ENCODE measurements at regions of chr12 and their contacts with region 1.

Region 1: GRCh38 chr12:31659087-31659933 is at the start of gene ETFBKMT:
- DNase-seq: peak; percentile 99
- H3K4me3 ChIP-seq: peak within 1 kb of the TSS; percentile 86
- H3K27ac ChIP-seq: peak within 1 kb of the TSS; percentile 86
- H3K4me1 ChIP-seq: peaks cover 20% of the 10 kb centered on the region
- CTCF ChIP-seq: peak; percentile 65
- total RNA-seq, gene ETFBKMT: 0.54 and 0.92 TPM in 2 replicates

Region 2: GRCh38 chr12:31205054-31205453 is 454.3 kb before region 1 on chr12:
- CTCF ChIA-PET with region 1: no interaction called
- POLR2A ChIA-PET with region 1: no interaction called
- intact Hi-C with region 1: no loop called
- DNase-seq: peak; percentile 39
- H3K4me3 ChIP-seq: no peak overlapping the region
- H3K27ac ChIP-seq: no peak overlapping the region
- H3K4me1 ChIP-seq: peaks cover 10% of the 10 kb centered on the region
- CTCF ChIP-seq: no peak

Region 3: DNA sequence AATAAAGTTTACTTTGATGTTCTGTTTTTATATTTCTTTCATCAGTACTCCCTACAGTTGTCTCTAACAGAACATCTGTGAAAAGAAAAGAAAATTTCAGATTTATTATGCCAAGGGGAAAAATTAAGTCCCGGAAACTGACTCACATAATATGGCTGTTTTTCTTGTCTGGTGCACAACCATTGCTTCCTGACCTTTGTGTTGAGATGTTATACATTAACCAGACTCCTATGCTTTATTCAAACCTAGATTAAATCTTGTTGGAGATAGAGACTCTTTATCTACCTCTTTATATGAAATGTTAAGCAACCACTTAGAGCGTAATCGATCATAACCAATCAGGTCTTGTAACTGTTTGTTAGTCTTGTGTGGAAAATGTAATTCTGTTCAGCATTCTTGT is 409.8 kb after region 1 on chr12:
- CTCF ChIA-PET with region 1: no interaction called
- POLR2A ChIA-PET with region 1: interaction called, 3 read pairs
- intact Hi-C with region 1: loop called (anchors 10 kb)
- DNase-seq: no peak
- H3K4me3 ChIP-seq: no peak overlapping the region
- H3K27ac ChIP-seq: no peak overlapping the region
- H3K4me1 ChIP-seq: no peaks in the 10 kb centered on the region
- CTCF ChIP-seq: no peak

Region 4: DNA sequence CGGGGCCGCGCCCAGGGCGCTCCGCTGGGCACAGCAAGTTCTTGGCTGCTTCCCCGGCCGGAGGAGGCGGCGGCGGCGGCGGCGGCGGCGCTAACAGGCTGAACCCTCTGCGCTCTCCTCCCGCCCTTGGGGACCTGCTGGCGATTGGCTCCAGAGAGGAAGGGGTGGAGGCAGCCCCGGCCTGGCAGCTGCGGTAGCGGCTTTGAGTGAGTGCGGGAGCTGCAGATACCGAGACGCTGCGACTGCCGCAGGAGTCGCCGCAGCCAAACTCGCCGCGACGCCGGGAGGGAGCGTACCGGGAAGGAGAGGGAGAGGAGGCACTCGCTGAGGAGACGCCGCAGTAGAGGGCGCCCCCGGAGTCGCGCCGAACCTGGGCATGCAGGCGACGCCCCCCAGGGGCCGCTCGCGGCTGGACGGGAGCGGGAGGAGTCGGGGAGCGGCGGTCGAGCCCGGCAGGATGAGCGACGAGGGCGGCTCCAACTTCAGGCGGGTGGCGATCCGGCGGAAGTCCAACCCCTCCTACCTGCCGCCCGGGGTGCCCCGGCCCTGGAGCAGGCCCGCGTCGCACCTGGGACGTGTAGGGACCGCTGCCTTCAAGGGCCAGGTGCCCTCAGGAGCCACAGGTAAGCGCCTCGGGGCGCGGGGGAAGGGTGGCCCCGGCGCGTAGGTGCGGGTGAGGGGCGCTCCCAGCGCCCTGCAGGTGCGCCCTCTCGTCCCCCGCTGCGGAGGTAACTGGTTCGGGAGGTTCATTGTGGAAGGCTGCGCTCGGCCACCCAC is 740.2 kb after region 1 on chr12 and contains the start of gene FGD4:
- CTCF ChIA-PET with region 1: no interaction called
- POLR2A ChIA-PET with region 1: no interaction called
- intact Hi-C with region 1: loop called (anchors 10 kb)
- DNase-seq: peak; percentile 88
- H3K4me3 ChIP-seq: peak within 1 kb of the TSS; percentile 73
- H3K27ac ChIP-seq: peak within 1 kb of the TSS; percentile 25
- H3K4me1 ChIP-seq: peaks cover 41% of the 10 kb centered on the region
- CTCF ChIP-seq: peak; percentile 83
- total RNA-seq, gene FGD4: 19.3 and 21.8 TPM in 2 replicates